GM13976 (cell line): ENCODE measurements at regions of chr6 and their contacts with region 1.

Region 1: GRCh38 chr6:2783188-2783963 is 18.2 kb downstream of the WRNIP1 start:
- DNase-seq: no peak
- CTCF ChIP-seq: no peak

Region 2: DNA sequence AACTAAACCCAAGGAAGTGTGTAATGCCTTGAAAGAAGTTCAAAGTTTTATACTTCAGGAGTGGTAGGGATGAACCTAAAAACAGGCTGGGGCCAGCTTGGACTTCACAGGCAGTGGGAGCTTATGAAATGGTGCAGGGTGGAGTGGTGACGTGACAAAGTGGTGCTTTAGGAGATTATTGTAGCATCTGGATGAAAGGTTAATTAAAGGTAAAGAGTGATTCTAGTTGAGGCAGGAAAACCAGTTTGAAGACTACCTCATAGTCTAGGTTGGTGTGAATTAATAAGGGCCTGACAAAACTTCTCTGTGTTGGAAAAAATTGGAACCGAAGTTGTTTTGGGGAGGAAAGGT is 507.5 kb before region 1 on chr6:
- in situ Hi-C with region 1: no loop called
- DNase-seq: no peak
- CTCF ChIP-seq: no peak

Region 3: GRCh38 chr6:2931970-2932748 is 148.8 kb after region 1 on chr6:
- in situ Hi-C with region 1: loop called (anchors 10 kb)
- DNase-seq: peak; percentile 86
- CTCF ChIP-seq: peak; percentile 94